ENCODE measurements at regions of chr13 and their contacts with region 1.

Region 1: GRCh38 chr13:74133657-74134201 is 475 bp downstream of the KLF12 start:
- DNase-seq: peak; percentile 89 to 98 (median 95)
- H3K4me3 ChIP-seq: peak overlapping the region; percentile 86 to 90
- H3K4me3 Mint-ChIP-seq: peak overlapping the region; percentile 96 to 100 (median 98)
- H3K27ac ChIP-seq: peak overlapping the region; percentile 94
- H3K27ac Mint-ChIP-seq: peak overlapping the region; percentile 97 to 100 (median 99)
- H3K4me1 ChIP-seq: peaks cover 41% of the 10 kb centered on the region
- H3K4me1 Mint-ChIP-seq: peaks cover 22 to 49% (median 28%) of the 10 kb centered on the region in 4 donors
- H3K27me3 ChIP-seq: no peaks in the 10 kb centered on the region
- H3K27me3 Mint-ChIP-seq: peaks cover 1 to 3% of the 10 kb centered on the region in 2 donors

Region 2: DNA sequence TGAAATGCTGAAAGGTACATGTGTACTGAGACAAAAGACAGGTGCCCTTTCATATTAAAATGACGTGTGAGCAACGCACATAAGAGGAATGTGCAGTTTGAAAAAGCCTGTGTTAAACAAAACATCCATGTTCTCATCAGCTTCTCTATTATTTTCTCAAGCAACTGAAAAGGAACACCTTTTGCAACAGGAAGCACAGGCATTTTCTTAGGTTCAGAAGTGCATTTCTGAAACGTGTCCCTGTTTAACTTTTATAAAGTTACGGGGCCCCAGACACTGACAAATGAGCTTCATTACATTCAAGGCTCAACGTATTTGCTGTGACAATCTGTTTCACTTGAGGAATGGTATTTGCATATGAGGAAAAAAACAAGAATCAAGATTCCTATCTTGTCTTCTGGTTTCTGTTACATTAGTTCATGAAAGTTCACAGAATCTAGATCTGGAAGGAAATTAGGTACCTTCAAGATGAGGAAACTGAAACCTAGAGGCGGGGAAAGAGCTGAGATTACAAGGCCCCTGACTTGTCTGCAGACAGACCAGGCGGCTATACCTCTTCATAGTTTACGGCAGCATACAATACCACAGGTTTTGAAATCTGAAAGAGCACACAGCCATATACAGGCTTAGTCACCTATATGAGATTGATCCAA is 431.2 kb before region 1 on chr13:
- CTCF ChIA-PET with region 1: no interaction called
- POLR2A ChIA-PET with region 1: no interaction called
- intact Hi-C with region 1: no loop called
- DNase-seq: peak; percentile 52 to 84 (median 74)
- H3K4me3 ChIP-seq: no peak overlapping the region
- H3K4me3 Mint-ChIP-seq: peak overlapping the region; percentile 67 to 88 (median 80)
- H3K27ac ChIP-seq: peak overlapping the region; percentile 29
- H3K27ac Mint-ChIP-seq: peak overlapping the region; percentile 89 to 98 (median 95)
- H3K4me1 ChIP-seq: peaks cover 46% of the 10 kb centered on the region
- H3K4me1 Mint-ChIP-seq: peaks cover 31 to 62% (median 33%) of the 10 kb centered on the region in 4 donors
- H3K27me3 ChIP-seq: no peaks in the 10 kb centered on the region
- H3K27me3 Mint-ChIP-seq: no peaks in the 10 kb centered on the region

Region 3: GRCh38 chr13:73715114-73715910 is 418.4 kb before region 1 on chr13:
- CTCF ChIA-PET with region 1: no interaction called
- POLR2A ChIA-PET with region 1: interaction called, 3 read pairs
- intact Hi-C with region 1: loop called (anchors 2 kb)
- DNase-seq: peak; percentile 71 to 91 (median 79)
- H3K4me3 ChIP-seq: peak overlapping the region in 1 of 2 donors; percentile 6
- H3K4me3 Mint-ChIP-seq: peak overlapping the region; percentile 58 to 88 (median 78)
- H3K27ac ChIP-seq: peak overlapping the region; percentile 41
- H3K27ac Mint-ChIP-seq: peak overlapping the region; percentile 84 to 98 (median 94)
- H3K4me1 ChIP-seq: peaks cover 52% of the 10 kb centered on the region
- H3K4me1 Mint-ChIP-seq: peaks cover 48 to 70% (median 64%) of the 10 kb centered on the region in 4 donors
- H3K27me3 ChIP-seq: no peaks in the 10 kb centered on the region
- H3K27me3 Mint-ChIP-seq: no peaks in the 10 kb centered on the region

Region 4: DNA sequence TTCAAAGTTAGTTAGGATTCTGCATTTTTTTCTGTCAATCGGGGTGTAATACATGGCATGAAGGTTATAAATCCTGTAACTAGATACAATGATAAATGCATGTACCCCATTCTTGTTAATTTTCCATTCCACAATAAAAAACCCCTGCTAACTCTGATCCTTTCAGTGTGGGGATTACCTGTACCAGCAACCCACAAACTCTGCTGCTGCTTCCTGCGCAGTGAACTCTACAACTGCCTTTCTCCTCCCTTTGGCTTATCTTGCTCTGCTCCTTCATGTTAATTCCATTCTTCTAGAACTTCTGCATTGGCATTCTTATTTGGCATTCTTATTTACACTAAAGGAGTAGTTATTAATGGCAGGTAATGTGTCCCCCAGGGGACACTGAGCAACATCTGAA is 272.6 kb before region 1 on chr13:
- CTCF ChIA-PET with region 1: no interaction called
- POLR2A ChIA-PET with region 1: interaction called, 12 read pairs
- intact Hi-C with region 1: loop called (anchors 10 kb)
- DNase-seq: peak in 2 of 5 donors; percentile 9 to 39
- H3K4me3 ChIP-seq: no peak overlapping the region
- H3K4me3 Mint-ChIP-seq: peak overlapping the region in 7 of 8 donors; percentile 9 to 78 (median 55)
- H3K27ac ChIP-seq: no peak overlapping the region
- H3K27ac Mint-ChIP-seq: peak overlapping the region; percentile 33 to 86 (median 66)
- H3K4me1 ChIP-seq: peaks cover 80% of the 10 kb centered on the region
- H3K4me1 Mint-ChIP-seq: peaks cover 48 to 57% (median 54%) of the 10 kb centered on the region in 4 donors
- H3K27me3 ChIP-seq: no peaks in the 10 kb centered on the region
- H3K27me3 Mint-ChIP-seq: no peaks in the 10 kb centered on the region

Region 5: GRCh38 chr13:74026753-74027152 is 107.0 kb before region 1 on chr13:
- CTCF ChIA-PET with region 1: interaction called, 4 read pairs
- POLR2A ChIA-PET with region 1: interaction called, 13 read pairs
- intact Hi-C with region 1: loop called (anchors 1 kb)
- DNase-seq: peak; percentile 63 to 88 (median 68)
- H3K4me3 ChIP-seq: peak overlapping the region in 1 of 2 donors; percentile 36
- H3K4me3 Mint-ChIP-seq: peak overlapping the region; percentile 79 to 93 (median 86)
- H3K27ac ChIP-seq: peak overlapping the region; percentile 54
- H3K27ac Mint-ChIP-seq: peak overlapping the region; percentile 87 to 97 (median 94)
- H3K4me1 ChIP-seq: peaks cover 83% of the 10 kb centered on the region
- H3K4me1 Mint-ChIP-seq: peaks cover 71 to 91% (median 81%) of the 10 kb centered on the region in 4 donors
- H3K27me3 ChIP-seq: no peaks in the 10 kb centered on the region
- H3K27me3 Mint-ChIP-seq: no peaks in the 10 kb centered on the region

Region 6: GRCh38 chr13:74090869-74091605 is 42.7 kb before region 1 on chr13:
- CTCF ChIA-PET with region 1: interaction called, 3 read pairs
- POLR2A ChIA-PET with region 1: interaction called, 10 read pairs
- intact Hi-C with region 1: loop called (anchors 2 kb)
- DNase-seq: peak in 4 of 5 donors; percentile 32 to 49 (median 38)
- H3K4me3 ChIP-seq: no peak overlapping the region
- H3K4me3 Mint-ChIP-seq: peak overlapping the region in 7 of 8 donors; percentile 18 to 86 (median 72)
- H3K27ac ChIP-seq: peak overlapping the region; percentile 8
- H3K27ac Mint-ChIP-seq: peak overlapping the region; percentile 61 to 91 (median 86)
- H3K4me1 ChIP-seq: peaks cover 85% of the 10 kb centered on the region
- H3K4me1 Mint-ChIP-seq: peaks cover 54 to 86% (median 65%) of the 10 kb centered on the region in 4 donors
- H3K27me3 ChIP-seq: no peaks in the 10 kb centered on the region
- H3K27me3 Mint-ChIP-seq: no peaks in the 10 kb centered on the region

Region 7: GRCh38 chr13:74226791-74227475 is 93.2 kb after region 1 on chr13:
- CTCF ChIA-PET with region 1: interaction called, 3 read pairs
- POLR2A ChIA-PET with region 1: interaction called, 103 read pairs
- intact Hi-C with region 1: loop called (anchors 1 kb)
- DNase-seq: no peak
- H3K4me3 ChIP-seq: no peak overlapping the region
- H3K4me3 Mint-ChIP-seq: no peak overlapping the region
- H3K27ac ChIP-seq: no peak overlapping the region
- H3K27ac Mint-ChIP-seq: no peak overlapping the region
- H3K4me1 ChIP-seq: peaks cover 24% of the 10 kb centered on the region
- H3K4me1 Mint-ChIP-seq: peaks cover 14 to 31% (median 20%) of the 10 kb centered on the region in 4 donors
- H3K27me3 ChIP-seq: no peaks in the 10 kb centered on the region
- H3K27me3 Mint-ChIP-seq: no peaks in the 10 kb centered on the region

Region 8: GRCh38 chr13:74825152-74825937 is 691.6 kb after region 1 on chr13:
- CTCF ChIA-PET with region 1: no interaction called
- POLR2A ChIA-PET with region 1: no interaction called
- intact Hi-C with region 1: no loop called
- DNase-seq: no peak
- H3K4me3 ChIP-seq: no peak overlapping the region
- H3K4me3 Mint-ChIP-seq: no peak overlapping the region
- H3K27ac ChIP-seq: no peak overlapping the region
- H3K27ac Mint-ChIP-seq: no peak overlapping the region
- H3K4me1 ChIP-seq: no peaks in the 10 kb centered on the region
- H3K4me1 Mint-ChIP-seq: no peaks in the 10 kb centered on the region
- H3K27me3 ChIP-seq: no peaks in the 10 kb centered on the region
- H3K27me3 Mint-ChIP-seq: no peaks in the 10 kb centered on the region